Activated B cell treated with CpG ODN at 0.5 μM for 24 hours (primary cell): ENCODE measurements at regions of chr19 and their contacts with region 1.

Region 1: GRCh38 chr19:6212403-6213265 is 67.1 kb downstream of the MLLT1 start:
- DNase-seq: no peak
- ATAC-seq: no peak
- H3K4me3 Mint-ChIP-seq: no peak overlapping the region
- H3K27ac Mint-ChIP-seq: no peak overlapping the region
- H3K4me1 Mint-ChIP-seq: no peaks in the 10 kb centered on the region
- H3K27me3 Mint-ChIP-seq: no peaks in the 10 kb centered on the region
- CTCF ChIP-seq: no peak

Region 2: DNA sequence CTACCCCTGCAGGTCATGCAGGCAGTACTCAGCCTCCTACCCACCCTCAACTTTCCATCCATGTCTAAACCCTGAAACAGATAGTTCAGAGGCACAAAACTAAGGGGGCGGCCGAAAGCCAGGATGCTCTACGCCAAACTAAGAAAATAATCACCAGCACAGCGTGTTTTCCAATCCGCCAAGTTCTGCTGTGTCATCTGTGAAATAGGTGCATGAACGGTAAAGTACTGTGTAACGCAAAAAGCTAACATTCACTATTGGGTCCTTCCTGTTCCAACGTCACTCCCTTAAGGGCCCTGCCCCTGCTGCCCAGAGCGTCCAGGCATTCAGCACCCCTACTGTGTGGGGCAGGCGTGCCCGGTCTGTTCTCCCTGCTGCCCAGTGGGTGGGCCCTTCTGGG is 1743.1 kb after region 1 on chr19:
- CTCF ChIA-PET with region 1: no interaction called
- POLR2A ChIA-PET with region 1: interaction called, 13 read pairs
- intact Hi-C with region 1: no loop called
- DNase-seq: no peak
- ATAC-seq: no peak
- H3K4me3 Mint-ChIP-seq: no peak overlapping the region
- H3K27ac Mint-ChIP-seq: no peak overlapping the region
- H3K4me1 Mint-ChIP-seq: no peaks in the 10 kb centered on the region
- H3K27me3 Mint-ChIP-seq: no peaks in the 10 kb centered on the region
- CTCF ChIP-seq: no peak